ENCODE measurements at regions of chr1 and their contacts with region 1.

Region 1: GRCh38 chr1:178607718-178608408 is 95.0 kb downstream of the TEX35 start:
- DNase-seq: no peak
- ATAC-seq: no peak
- H3K4me3 ChIP-seq: no peak overlapping the region
- H3K27ac ChIP-seq: peak overlapping the region; percentile 97
- H3K4me1 ChIP-seq: peaks cover 52% of the 10 kb centered on the region
- H3K27me3 ChIP-seq: no peaks in the 10 kb centered on the region
- CTCF ChIP-seq: no peak

Region 2: DNA sequence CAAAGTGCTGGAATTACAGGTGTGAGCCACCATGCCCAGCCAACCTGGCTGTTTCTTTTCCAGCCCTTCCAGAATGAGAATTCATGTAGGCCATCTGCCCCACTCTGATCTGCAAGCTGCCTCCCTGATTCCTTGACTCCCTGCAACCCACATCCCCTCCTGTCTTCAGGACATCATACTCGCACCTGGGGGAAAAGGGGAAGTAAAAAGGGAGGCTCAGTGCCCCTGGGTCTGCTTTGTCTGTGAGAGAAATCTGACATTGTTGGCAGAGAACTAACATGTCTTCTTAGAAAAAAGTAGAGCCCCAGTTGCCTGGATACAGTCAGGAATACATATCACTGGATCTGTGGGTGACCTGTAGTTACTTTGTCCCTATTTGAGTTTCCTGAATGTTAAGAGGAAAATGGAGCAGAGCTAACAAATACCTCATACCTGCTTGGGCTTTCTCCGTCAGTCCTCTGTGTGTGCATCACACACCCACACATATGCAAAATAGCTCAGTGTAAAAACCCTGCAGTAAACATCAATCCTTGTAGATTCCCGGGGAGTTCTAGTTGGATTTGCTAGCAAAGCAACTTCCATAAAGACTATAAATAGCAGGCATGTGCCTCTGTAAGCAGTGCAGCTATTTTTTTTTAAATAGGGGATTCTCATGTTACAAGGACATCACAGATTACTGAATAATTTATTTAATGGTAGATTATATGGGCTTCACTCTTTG is 32.1 kb before region 1 on chr1:
- CTCF ChIA-PET with region 1: no interaction called
- POLR2A ChIA-PET with region 1: no interaction called
- intact Hi-C with region 1: no loop called
- DNase-seq: no peak
- ATAC-seq: no peak
- H3K4me3 ChIP-seq: no peak overlapping the region
- H3K27ac ChIP-seq: no peak overlapping the region
- H3K4me1 ChIP-seq: no peaks in the 10 kb centered on the region
- H3K27me3 ChIP-seq: no peaks in the 10 kb centered on the region
- CTCF ChIP-seq: no peak

Region 3: GRCh38 chr1:178650934-178651511 is 43.2 kb after region 1 on chr1:
- CTCF ChIA-PET with region 1: interaction called, 4 read pairs
- POLR2A ChIA-PET with region 1: no interaction called
- intact Hi-C with region 1: loop called (anchors 1 kb)
- DNase-seq: peak; percentile 85
- ATAC-seq: peak; percentile 70
- H3K4me3 ChIP-seq: no peak overlapping the region
- H3K27ac ChIP-seq: peak overlapping the region; percentile 95
- H3K4me1 ChIP-seq: peaks cover 57% of the 10 kb centered on the region
- H3K27me3 ChIP-seq: no peaks in the 10 kb centered on the region
- CTCF ChIP-seq: no peak